AG04450 (cell line): ENCODE measurements at regions of chr2 and their contacts with region 1.

Region 1: GRCh38 chr2:165874445-165875039 is 79.0 kb downstream of the TTC21B start:
- DNase-seq: peak; percentile 41
- H3K4me3 ChIP-seq: no peak overlapping the region
- H3K27ac ChIP-seq: no peak overlapping the region
- H3K27me3 ChIP-seq: no peaks in the 10 kb centered on the region
- CTCF ChIP-seq: peak; percentile 84

Region 2: GRCh38 chr2:165376571-165376975 is 498.0 kb before region 1 on chr2:
- CTCF ChIA-PET with region 1: interaction called, 10 read pairs
- POLR2A ChIA-PET with region 1: no interaction called
- DNase-seq: no peak
- H3K4me3 ChIP-seq: no peak overlapping the region
- H3K27ac ChIP-seq: no peak overlapping the region
- H3K27me3 ChIP-seq: no peaks in the 10 kb centered on the region
- CTCF ChIP-seq: no peak

Region 3: DNA sequence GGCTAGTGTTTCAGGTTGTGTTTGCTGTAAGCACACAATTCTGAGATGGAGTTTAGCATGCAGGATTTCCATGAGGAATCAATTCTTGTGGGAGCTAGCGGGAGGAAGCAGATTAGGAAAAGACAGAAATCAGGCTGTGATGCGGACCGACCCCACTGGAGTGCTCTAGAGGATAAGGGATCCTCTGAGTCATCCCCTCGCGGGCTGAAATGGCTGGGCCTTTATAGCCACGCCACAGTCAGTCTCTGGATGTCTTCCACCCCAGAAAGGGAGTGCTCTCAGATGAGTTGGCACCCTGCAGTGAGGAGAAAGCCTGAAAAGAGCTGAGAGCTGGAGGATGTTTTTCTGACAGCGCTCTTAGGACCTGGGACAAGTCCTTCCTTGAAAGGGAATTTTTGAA is 182.9 kb before region 1 on chr2:
- CTCF ChIA-PET with region 1: interaction called, 14 read pairs
- POLR2A ChIA-PET with region 1: no interaction called
- DNase-seq: no peak
- H3K4me3 ChIP-seq: no peak overlapping the region
- H3K27ac ChIP-seq: no peak overlapping the region
- H3K27me3 ChIP-seq: no peaks in the 10 kb centered on the region
- CTCF ChIP-seq: no peak

Region 4: DNA sequence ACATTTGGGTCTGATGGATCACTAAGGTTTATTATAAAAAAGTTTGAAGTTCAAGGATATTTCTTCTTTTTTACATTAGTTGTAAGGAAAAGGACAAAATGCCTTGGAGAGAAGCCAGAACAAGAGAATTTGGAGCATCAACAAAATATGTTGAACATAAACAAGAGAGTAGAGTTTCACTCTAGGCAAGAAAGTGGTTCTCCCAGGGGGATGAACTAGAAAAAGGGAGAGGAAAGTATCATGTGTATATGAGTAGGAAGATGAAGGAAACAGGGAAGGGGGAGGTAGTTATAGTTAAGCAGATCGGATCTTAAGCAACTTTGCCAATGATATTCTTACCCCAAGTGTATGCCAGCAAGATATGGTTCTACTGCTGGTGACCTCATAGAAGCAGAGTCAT is 16.7 kb before region 1 on chr2:
- CTCF ChIA-PET with region 1: interaction called, 11 read pairs
- POLR2A ChIA-PET with region 1: no interaction called
- DNase-seq: peak; percentile 61
- H3K4me3 ChIP-seq: no peak overlapping the region
- H3K27ac ChIP-seq: peak overlapping the region; percentile 62
- H3K27me3 ChIP-seq: no peaks in the 10 kb centered on the region
- CTCF ChIP-seq: no peak